Thyroid gland (tissue), 4 donors: ENCODE measurements at regions of chr13 and their contacts with region 1.

Region 1: DNA sequence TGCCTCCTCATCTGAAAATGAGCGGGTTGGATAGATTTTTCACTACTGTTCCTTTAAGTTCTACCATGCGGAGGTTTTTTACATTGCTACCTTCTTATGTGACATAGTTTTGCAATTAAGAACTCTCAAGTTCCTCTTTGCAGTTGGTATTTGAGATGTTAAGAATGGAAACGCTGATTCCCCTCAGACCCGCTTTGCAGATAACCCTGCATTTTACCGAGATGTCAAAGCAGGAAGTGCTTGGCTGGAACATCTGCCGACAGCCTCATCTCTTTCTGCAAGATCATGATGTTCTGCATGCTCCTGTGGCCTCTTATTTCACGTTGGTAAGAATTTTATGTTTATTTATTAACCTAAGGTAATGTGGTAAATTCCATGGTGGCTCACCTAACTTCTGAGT is 22.4 kb downstream of the PABPC3 start:
- DNase-seq: no peak
- H3K4me3 ChIP-seq: no peak overlapping the region
- H3K27ac ChIP-seq: no peak overlapping the region
- H3K4me1 ChIP-seq: no peaks in the 10 kb centered on the region
- H3K27me3 ChIP-seq: no peaks in the 10 kb centered on the region
- CTCF ChIP-seq: no peak
- POLR2A ChIP-seq: no peak

Region 2: DNA sequence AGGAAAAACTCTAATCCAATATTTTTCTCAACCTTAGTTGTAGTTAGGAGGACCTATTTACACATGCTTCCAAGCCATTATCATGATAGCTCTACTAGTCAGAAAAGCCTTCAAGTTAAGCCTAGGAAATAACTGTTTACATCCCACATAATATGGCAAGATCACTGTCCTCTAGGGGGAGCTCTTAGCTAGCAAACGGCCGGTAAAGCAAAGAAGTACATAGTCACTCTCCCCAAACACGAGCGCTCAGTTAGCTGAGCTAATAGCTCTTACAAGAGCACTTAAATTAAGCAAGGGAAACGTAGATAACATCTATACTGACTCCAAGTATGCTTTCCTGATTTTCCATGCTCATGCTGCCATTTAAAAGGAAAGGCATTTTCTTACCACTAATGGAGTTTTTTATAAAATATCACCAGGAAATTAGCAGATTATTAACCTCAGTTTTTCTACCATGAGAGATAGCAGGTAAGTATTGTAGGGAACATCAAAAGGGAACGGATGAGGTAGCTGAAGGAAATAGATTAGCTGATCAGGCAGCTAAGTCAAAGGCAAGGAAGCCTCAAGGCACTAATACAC is 123.1 kb before region 1 on chr13:
- intact Hi-C with region 1: loop called (anchors 5 kb)
- DNase-seq: peak; percentile 68 to 77
- H3K4me3 ChIP-seq: no peak overlapping the region
- H3K27ac ChIP-seq: no peak overlapping the region
- H3K4me1 ChIP-seq: no peaks in the 10 kb centered on the region
- H3K27me3 ChIP-seq: no peaks in the 10 kb centered on the region
- CTCF ChIP-seq: peak; percentile 44 to 90 (median 82)
- POLR2A ChIP-seq: no peak